ENCODE measurements at regions of chr3 and their contacts with region 1.

Region 1: DNA sequence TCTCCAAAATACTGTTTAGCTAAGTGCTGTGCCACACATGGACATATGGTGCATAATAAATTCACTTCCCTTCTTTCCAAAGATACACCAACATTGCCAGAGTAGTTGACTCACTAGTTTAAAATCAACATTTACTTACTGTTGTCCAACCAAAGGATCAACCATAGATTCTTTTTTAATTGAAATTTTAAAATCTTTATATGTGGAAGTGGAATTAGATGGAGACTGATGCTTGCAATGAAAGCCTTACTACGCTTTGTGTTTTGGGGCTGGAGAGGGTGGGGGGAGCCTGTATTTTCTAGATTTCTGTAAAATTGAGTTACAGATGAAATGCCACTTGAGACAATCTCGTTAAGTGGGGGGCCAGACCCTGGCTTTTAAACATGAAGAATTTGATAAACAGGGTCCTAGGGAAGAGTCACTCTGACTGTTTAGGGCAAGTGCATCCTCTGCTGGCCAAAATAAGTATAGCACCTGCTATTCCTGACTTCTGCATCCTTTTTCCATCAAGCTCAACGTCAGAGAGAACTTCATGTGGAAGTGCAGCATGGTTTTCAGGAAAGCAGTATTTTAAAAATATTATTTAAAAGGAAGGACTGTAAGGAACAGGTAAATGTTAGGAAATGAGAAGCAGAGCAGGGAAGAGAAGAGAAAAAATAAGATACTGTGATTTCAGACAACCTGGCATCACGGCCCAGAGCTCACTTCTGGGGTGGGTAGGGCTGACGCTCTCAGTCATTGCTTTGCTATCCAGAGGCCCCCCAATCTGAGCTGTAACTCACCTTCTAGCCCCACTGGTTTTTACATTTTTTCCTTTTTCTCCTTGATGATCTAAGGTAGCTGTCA is 76.7 kb downstream of the BOC start:
- DNase-seq: peak; percentile 63 to 77
- H3K4me3 ChIP-seq: no peak overlapping the region
- H3K27ac ChIP-seq: peak overlapping the region; percentile 63 to 73
- H3K4me1 ChIP-seq: peaks cover 0 to 10% of the 10 kb centered on the region in 2 donors
- H3K27me3 ChIP-seq: no peaks in the 10 kb centered on the region
- CTCF ChIP-seq: peak; percentile 98 to 99 (median 98)
- POLR2A ChIP-seq: no peak

Region 2: GRCh38 chr3:113051302-113051711 is 236.7 kb before region 1 on chr3:
- intact Hi-C with region 1: loop called (anchors 10 kb)
- DNase-seq: peak; percentile 88 to 92
- H3K4me3 ChIP-seq: no peak overlapping the region
- H3K27ac ChIP-seq: peak overlapping the region; percentile 25 to 66
- H3K4me1 ChIP-seq: no peaks in the 10 kb centered on the region
- H3K27me3 ChIP-seq: no peaks in the 10 kb centered on the region
- CTCF ChIP-seq: peak; percentile 92 to 96 (median 94)
- POLR2A ChIP-seq: no peak

Region 3: GRCh38 chr3:113136071-113136470 is 152.0 kb before region 1 on chr3:
- intact Hi-C with region 1: loop called (anchors 5 kb)
- DNase-seq: no peak
- H3K4me3 ChIP-seq: no peak overlapping the region
- H3K27ac ChIP-seq: peak overlapping the region; percentile 31 to 42
- H3K4me1 ChIP-seq: no peaks in the 10 kb centered on the region
- H3K27me3 ChIP-seq: no peaks in the 10 kb centered on the region
- CTCF ChIP-seq: peak; percentile 68 to 83 (median 76)
- POLR2A ChIP-seq: no peak

Region 4: DNA sequence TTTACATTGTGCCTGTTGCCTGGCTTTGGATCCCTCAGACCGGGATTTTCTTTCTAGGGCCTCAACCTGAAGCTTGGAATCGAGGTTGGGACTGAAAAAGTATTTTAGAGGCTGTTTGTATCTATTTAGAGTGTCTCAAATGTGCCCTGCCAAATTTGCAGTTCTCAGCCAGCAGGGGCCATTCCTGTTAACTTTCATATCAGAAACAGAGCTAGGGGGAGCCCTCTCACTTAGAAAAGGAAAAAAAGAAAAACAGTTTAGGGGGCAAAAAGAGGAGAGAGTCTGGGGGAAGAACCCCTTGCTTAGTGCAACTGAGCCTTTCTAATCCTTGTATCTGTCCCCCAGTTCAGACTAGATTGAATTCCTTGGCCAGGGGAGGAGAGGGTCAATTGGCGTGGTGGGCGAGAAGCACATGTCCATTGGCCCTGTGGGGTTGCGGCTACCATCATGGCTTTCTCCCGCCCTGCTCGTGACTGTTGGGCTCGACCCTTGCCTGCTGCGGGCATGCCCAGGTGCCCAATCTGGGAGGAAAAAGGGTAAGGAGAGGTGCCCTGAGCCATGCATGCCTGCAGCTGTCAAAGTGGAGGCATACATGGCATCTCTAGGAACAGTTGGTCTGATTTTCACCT is 51.7 kb after region 1 on chr3:
- intact Hi-C with region 1: no loop called
- DNase-seq: no peak
- H3K4me3 ChIP-seq: no peak overlapping the region
- H3K27ac ChIP-seq: no peak overlapping the region
- H3K4me1 ChIP-seq: no peaks in the 10 kb centered on the region
- H3K27me3 ChIP-seq: no peaks in the 10 kb centered on the region
- CTCF ChIP-seq: no peak
- POLR2A ChIP-seq: no peak